Common myeloid progenitor, CD34-positive (primary cell): ENCODE measurements at regions of chr12 and their contacts with region 1.

Region 1: GRCh38 chr12:45728630-45729232 is 775 bp upstream of the ARID2 start:
- DNase-seq: peak; percentile 98 to 99 (median 99)
- H3K4me3 ChIP-seq: peak overlapping the region; percentile 65 to 100 (median 98)
- H3K27ac ChIP-seq: peak overlapping the region; percentile 99
- H3K4me1 ChIP-seq: peaks cover 18 to 50% (median 38%) of the 10 kb centered on the region in 4 experiments
- H3K27me3 ChIP-seq: no peaks in the 10 kb centered on the region

Region 2: GRCh38 chr12:45543906-45544315 is 184.8 kb before region 1 on chr12:
- CTCF ChIA-PET with region 1: interaction called, 82 read pairs
- POLR2A ChIA-PET with region 1: interaction called, 4 read pairs
- DNase-seq: peak; percentile 85 to 90 (median 88)
- H3K4me3 ChIP-seq: no peak overlapping the region
- H3K27ac ChIP-seq: no peak overlapping the region
- H3K4me1 ChIP-seq: no peaks in the 10 kb centered on the region
- H3K27me3 ChIP-seq: no peaks in the 10 kb centered on the region

Region 3: DNA sequence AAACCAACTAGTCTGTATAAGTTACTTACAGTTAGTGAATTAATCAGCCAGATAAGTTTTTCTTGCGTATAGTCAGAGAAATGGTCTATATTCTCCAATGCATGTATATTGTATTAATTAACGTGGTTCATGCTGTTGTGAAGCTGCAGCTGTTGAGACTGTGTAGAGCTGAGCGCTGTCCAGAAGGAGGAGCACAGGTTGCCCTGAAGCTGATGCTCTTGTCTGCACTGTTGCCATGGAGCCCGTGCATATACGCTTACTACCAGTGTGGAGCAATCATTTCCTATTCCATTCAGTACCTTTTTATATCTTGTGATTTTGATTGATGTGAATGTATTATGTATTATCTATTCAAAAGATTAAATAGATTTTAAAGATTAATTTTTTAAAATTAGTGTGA is 73.5 kb before region 1 on chr12:
- CTCF ChIA-PET with region 1: interaction called, 29 read pairs
- POLR2A ChIA-PET with region 1: no interaction called
- DNase-seq: peak; percentile 68 to 78 (median 68)
- H3K4me3 ChIP-seq: no peak overlapping the region
- H3K27ac ChIP-seq: no peak overlapping the region
- H3K4me1 ChIP-seq: peaks cover 0 to 20% (median 11%) of the 10 kb centered on the region in 4 experiments
- H3K27me3 ChIP-seq: no peaks in the 10 kb centered on the region

Region 4: DNA sequence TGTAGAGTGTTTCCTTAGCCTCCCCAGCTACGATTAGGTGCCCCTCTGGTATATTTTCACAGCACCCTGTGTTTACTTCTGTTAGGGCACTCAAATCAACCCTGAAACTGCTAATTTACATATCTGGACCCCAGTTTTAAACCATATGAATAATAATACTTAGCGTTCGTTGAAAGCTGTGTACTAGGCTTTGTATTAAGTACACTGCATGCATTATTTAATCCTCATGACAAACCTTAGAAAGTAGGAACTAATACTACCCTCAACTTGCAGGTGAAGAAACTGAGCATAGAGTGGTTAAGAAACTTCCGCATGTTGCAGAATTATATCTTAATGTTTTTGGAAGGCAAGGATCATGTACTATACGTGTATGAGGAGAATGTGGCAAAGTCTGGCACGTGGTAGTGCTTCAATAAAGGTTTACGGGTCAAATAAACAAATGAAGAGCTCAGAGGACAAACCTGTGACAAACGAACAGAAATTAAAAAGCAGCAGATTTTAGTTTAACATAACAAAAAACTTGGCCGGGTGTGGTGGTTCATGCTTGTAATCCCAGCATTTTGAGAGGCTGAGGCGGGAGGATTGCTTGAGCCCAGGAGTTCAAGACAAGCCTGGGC is 21.4 kb before region 1 on chr12:
- CTCF ChIA-PET with region 1: interaction called, 18 read pairs
- POLR2A ChIA-PET with region 1: no interaction called
- DNase-seq: no peak
- H3K4me3 ChIP-seq: no peak overlapping the region
- H3K27ac ChIP-seq: no peak overlapping the region
- H3K4me1 ChIP-seq: no peaks in the 10 kb centered on the region
- H3K27me3 ChIP-seq: no peaks in the 10 kb centered on the region

Region 5: DNA sequence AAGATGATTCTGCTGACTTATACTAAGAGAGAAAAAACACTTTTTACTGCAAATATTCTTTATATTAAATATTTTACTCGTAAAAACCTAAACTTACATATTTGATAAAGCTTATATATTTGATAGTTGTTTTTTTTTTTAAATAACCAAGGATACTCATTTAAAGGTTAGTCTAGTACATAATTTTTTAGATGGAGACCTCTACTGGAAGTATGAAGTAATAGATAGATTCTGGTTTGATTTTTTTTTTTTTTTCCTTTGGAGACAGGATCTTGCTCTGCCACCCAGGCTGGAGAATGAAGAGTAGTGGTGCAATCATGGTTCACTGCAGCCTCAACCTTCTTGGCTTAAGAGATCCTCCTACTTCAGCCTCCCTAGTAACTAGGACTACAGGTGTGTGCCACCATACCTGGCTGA is 17.1 kb after region 1 on chr12:
- CTCF ChIA-PET with region 1: interaction called, 12 read pairs
- POLR2A ChIA-PET with region 1: interaction called, 7 read pairs
- DNase-seq: peak; percentile 25 to 45 (median 39)
- H3K4me3 ChIP-seq: no peak overlapping the region
- H3K27ac ChIP-seq: no peak overlapping the region
- H3K4me1 ChIP-seq: no peaks in the 10 kb centered on the region
- H3K27me3 ChIP-seq: no peaks in the 10 kb centered on the region

Region 6: DNA sequence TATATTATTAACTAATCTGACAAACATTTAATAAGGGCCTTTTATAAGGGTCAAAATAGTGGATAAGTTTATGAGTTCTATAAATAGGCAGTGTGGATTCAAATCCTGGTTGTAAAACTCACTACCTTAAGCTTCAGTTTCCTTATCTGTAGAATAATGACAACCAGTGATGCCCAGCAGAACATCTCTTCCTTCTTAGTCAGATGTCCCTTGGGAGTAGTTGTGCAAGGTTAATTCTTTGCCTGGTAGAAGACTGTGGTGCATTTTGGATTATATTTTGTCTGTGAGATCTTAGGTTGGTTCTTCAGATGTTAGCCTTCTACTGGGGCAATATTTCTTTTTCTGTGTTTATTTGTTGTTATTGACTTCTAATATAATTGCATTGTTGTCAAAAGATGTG is 60.3 kb after region 1 on chr12:
- CTCF ChIA-PET with region 1: no interaction called
- POLR2A ChIA-PET with region 1: no interaction called
- DNase-seq: no peak
- H3K4me3 ChIP-seq: no peak overlapping the region
- H3K27ac ChIP-seq: no peak overlapping the region
- H3K4me1 ChIP-seq: no peaks in the 10 kb centered on the region
- H3K27me3 ChIP-seq: no peaks in the 10 kb centered on the region